Activated CD4-positive, alpha-beta T cell treated with anti-CD3 and anti-CD28 coated beads for 36 hours (primary cell): ENCODE measurements at regions of chr4 and their contacts with region 1.

Region 1: DNA sequence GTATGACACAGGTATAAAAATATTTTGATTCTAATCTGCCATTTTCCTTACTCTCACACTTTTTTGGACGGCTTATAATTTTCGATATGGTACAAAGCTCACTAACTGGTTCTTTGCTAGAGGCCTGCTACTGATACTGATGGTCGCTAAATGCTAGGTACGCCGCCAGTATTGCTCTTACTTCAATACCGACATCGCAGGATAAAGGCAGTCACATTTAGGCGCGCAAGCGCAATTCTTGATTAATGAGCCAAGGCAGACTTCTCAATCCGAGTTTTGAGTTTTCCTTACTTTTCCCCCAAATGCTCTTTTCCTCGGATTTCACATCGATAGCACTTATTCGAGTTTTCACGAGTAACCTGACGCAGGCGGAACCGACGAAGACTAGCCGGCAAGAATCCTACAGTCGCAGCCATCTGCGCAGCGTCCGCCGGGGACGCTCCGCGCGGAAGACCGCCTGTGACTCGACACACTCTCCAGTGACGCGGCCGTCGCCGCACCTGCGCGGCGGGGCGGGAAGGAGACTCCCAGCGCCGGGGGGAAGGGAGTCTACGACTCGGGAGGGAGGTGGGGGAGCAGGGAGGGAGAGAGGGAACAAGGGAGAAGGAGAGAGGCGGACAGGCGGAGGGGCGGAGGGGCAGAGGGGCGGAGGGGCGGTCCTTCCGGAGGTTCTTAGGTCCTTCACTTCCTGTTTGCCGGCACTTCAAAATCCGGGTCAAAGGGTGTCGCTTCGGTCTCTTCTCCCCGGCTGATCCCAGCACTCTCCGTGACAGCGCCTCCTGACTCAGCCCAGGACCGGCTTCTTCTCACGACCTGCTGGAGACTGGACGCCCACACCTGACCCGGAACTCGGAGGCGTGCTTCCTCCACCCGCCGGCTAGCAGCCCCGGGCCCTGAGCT is at the start of gene USP38:
- DNase-seq: peak; percentile 95
- ATAC-seq: peak; percentile 90
- H3K4me3 Mint-ChIP-seq: peak within 1 kb of the TSS; percentile 85
- H3K27ac Mint-ChIP-seq: peak within 1 kb of the TSS; percentile 97
- H3K4me1 Mint-ChIP-seq: peaks cover 38% of the 10 kb centered on the region
- H3K27me3 Mint-ChIP-seq: no peaks in the 10 kb centered on the region
- total RNA-seq, gene USP38: 17.4 to 20.0 TPM

Region 2: DNA sequence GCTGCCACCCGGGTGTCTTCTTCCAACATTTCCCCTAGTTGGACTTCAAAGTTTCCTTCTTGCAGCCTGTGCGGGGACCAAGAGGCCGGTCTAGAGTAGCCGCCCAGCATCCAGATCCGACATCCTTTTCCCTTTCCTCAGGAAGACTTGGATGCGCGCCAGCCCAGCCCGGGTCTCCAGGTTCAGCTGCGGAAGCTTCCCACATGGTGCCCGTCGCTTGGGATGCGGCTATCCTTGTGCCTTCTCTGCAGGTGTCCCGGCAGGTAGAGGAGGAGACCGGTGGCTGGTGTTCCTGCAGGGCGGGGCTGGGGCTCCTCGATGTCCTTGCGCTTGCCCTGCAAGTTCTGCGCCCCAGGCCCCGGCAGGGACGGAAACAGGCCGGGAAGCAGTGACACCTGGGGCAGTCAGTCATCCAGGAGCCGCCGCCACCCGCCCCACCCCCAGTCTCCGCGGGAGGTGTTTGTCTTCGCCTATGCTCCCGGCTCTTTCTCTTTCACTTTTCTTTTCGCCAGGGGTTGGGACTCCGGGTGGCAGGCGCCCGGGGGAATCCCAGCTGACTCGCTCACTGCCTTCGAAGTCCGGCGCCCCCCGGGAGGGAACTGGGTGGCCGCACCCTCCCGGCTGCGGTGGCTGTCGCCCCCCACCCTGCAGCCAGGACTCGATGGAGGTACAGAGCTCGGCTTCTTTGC is 1548.2 kb before region 1 on chr4 and contains the start of gene IL15:
- CTCF ChIA-PET with region 1: no interaction called
- POLR2A ChIA-PET with region 1: no interaction called
- intact Hi-C with region 1: loop called in 1 of 2 experiments (anchors 10 kb)
- DNase-seq: peak; percentile 85
- ATAC-seq: peak; percentile 90
- H3K4me3 Mint-ChIP-seq: peak within 1 kb of the TSS; percentile 86
- H3K27ac Mint-ChIP-seq: peak within 1 kb of the TSS; percentile 67
- H3K4me1 Mint-ChIP-seq: peaks cover 18% of the 10 kb centered on the region
- H3K27me3 Mint-ChIP-seq: peaks cover 20% of the 10 kb centered on the region
- total RNA-seq, gene IL15: 0.37 to 1.1 TPM

Region 3: GRCh38 chr4:142379277-142380057 is 805.0 kb before region 1 on chr4:
- CTCF ChIA-PET with region 1: no interaction called
- POLR2A ChIA-PET with region 1: no interaction called
- intact Hi-C with region 1: loop called in 1 of 2 experiments (anchors 10 kb)
- DNase-seq: no peak
- ATAC-seq: no peak
- H3K4me3 Mint-ChIP-seq: no peak overlapping the region
- H3K27ac Mint-ChIP-seq: peak overlapping the region; percentile 93
- H3K4me1 Mint-ChIP-seq: peaks cover 83% of the 10 kb centered on the region
- H3K27me3 Mint-ChIP-seq: no peaks in the 10 kb centered on the region

Region 4: GRCh38 chr4:143358923-143359643 is 174.6 kb after region 1 on chr4:
- CTCF ChIA-PET with region 1: no interaction called
- POLR2A ChIA-PET with region 1: no interaction called
- intact Hi-C with region 1: loop called (anchors 2 to 5 kb)
- DNase-seq: peak; percentile 69
- ATAC-seq: peak; percentile 88
- H3K4me3 Mint-ChIP-seq: peak overlapping the region; percentile 17
- H3K27ac Mint-ChIP-seq: peak overlapping the region; percentile 90
- H3K4me1 Mint-ChIP-seq: peaks cover 27% of the 10 kb centered on the region
- H3K27me3 Mint-ChIP-seq: no peaks in the 10 kb centered on the region

Region 5: DNA sequence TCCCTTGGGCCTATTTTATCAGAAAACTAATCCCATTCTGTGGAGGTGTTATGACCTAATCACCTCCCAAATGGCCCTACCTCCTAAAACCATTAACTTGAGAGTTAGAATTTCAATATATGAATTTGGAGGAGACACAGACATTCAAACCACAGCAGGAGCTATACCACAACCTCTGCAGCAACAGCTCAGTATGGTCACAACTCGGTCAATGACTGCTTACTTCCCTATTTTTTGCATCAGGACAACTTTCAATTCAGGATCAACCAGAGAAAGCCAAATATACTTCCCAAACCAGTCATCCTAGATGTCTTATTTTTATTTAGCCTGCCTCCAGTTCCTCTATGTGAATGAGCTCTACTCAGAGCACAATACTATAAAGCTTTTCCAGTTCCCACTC is 317.8 kb after region 1 on chr4:
- CTCF ChIA-PET with region 1: no interaction called
- POLR2A ChIA-PET with region 1: no interaction called
- intact Hi-C with region 1: no loop called
- DNase-seq: no peak
- ATAC-seq: no peak
- H3K4me3 Mint-ChIP-seq: no peak overlapping the region
- H3K27ac Mint-ChIP-seq: no peak overlapping the region
- H3K4me1 Mint-ChIP-seq: no peaks in the 10 kb centered on the region
- H3K27me3 Mint-ChIP-seq: no peaks in the 10 kb centered on the region

Region 6: GRCh38 chr4:145097821-145098674 is 1913.6 kb after region 1 on chr4 and contains the starts of genes ABCE1 and ANAPC10:
- CTCF ChIA-PET with region 1: no interaction called
- POLR2A ChIA-PET with region 1: no interaction called
- intact Hi-C with region 1: loop called (anchors 10 kb)
- DNase-seq: peak; percentile 98
- ATAC-seq: peak; percentile 92
- H3K4me3 Mint-ChIP-seq: peak within 1 kb of the TSS; percentile 97
- H3K27ac Mint-ChIP-seq: peak within 1 kb of the TSS; percentile 99
- H3K4me1 Mint-ChIP-seq: peaks cover 22% of the 10 kb centered on the region
- H3K27me3 Mint-ChIP-seq: no peaks in the 10 kb centered on the region
- total RNA-seq, gene ABCE1: 148 to 172 TPM
- total RNA-seq, gene ANAPC10: 27.7 to 31.5 TPM